ENCODE measurements at regions of chr9 and their contacts with region 1.

Region 1: DNA sequence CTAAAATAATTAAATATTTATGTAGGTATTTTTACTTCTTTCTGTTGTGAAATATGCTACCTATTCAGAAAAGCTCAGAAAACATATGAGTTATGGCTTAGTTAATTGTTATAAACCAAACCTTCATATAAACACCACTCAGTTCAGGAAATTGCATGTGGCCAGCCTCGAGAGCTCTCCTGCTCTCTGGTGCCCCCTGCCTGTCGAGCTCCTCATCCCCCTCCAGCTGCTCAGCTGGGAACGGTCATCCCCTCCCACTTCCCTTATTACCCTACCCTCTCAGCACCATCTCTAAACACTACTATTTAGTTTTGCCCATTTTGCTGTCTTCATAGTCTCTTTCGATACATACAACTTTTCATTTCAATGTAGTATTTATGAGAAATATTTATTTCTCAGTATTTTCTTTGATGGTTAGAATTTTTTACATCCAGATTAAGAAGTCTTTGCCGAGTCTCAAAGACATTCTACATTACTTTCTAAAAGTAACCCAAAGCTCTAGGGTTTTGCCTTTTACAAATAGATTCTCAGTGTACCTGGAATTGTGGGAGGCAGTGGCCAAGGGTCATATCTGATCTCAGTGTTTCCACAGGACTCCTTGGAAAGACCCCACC is 51.2 kb upstream of the SEMA4D start:
- DNase-seq: peak; percentile 75 to 93 (median 84)
- ATAC-seq: peak; percentile 99
- H3K4me3 ChIP-seq: no peak overlapping the region
- H3K4me3 Mint-ChIP-seq: no peak overlapping the region
- H3K27ac ChIP-seq: no peak overlapping the region
- H3K27ac Mint-ChIP-seq: peak overlapping the region; percentile 40
- H3K4me1 ChIP-seq: peaks cover 15% of the 10 kb centered on the region
- H3K4me1 Mint-ChIP-seq: peaks cover 26% of the 10 kb centered on the region
- H3K27me3 ChIP-seq: no peaks in the 10 kb centered on the region
- H3K27me3 Mint-ChIP-seq: no peaks in the 10 kb centered on the region
- CTCF ChIP-seq: peak; percentile 99

Region 2: DNA sequence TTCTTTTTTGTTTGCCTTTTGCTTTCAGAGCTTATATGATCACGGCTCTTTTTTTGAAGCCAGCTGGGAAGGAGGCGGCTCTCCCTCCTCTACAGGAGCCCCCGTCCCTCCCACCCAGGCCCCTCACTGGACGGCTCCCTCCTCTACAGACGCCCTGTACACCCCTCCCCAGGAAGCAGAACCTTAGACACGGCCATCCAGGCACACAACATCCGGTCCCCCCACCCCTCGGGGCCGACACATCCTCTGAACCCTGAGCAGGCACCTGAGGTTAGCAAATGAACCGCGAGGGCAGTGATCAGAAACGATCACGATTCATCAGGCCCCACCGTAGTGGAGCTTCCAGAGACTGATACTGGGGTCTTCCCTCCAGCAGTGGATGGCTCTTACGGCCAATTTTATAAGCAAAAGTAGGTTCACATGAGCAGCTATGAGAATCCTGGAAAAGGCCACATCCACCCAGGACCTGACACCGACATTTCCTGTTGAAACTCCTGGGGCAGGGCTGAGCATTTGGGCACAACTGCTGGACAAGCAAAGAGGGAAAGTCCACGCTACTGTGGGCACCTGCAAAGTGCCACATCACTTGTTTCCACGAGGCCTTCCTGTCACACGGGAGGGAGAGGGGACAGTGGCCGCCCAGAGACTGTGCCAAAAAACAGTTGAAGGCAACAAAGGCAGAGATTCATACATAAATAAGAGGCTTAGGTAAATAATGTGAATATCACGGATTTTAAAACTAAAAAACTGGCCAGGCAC is 130.1 kb before region 1 on chr9:
- CTCF ChIA-PET with region 1: interaction called, 17 read pairs
- POLR2A ChIA-PET with region 1: interaction called, 7 read pairs
- intact Hi-C with region 1: no loop called
- DNase-seq: peak; percentile 51 to 89 (median 73)
- ATAC-seq: peak; percentile 66
- H3K4me3 ChIP-seq: peak overlapping the region; percentile 44
- H3K4me3 Mint-ChIP-seq: peak overlapping the region; percentile 89
- H3K27ac ChIP-seq: peak overlapping the region; percentile 58 to 86
- H3K27ac Mint-ChIP-seq: peak overlapping the region; percentile 96
- H3K4me1 ChIP-seq: peaks cover 92% of the 10 kb centered on the region
- H3K4me1 Mint-ChIP-seq: peaks cover 97% of the 10 kb centered on the region
- H3K27me3 ChIP-seq: no peaks in the 10 kb centered on the region
- H3K27me3 Mint-ChIP-seq: no peaks in the 10 kb centered on the region
- CTCF ChIP-seq: no peak

Region 3: DNA sequence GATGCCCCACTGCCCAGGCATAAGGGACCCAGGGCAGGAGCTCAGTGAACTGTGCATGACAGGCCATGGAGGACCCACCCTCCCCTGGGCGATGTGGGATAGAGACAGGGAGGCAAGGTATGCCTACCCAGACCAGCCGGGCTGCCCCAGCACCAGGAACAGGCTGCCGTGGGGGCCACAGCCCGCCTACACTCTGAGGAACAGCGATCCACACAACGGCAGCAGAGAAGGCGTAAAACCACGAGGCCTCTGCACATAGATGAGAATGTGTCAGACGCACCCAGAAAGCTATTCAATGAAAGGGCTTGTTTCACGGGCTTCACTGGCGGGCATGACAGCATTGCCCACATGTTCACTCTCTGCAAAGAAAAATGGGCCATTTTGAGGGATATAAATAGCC is 100.8 kb before region 1 on chr9:
- CTCF ChIA-PET with region 1: interaction called, 11 read pairs
- POLR2A ChIA-PET with region 1: interaction called, 16 read pairs
- intact Hi-C with region 1: no loop called
- DNase-seq: peak in 6 of 14 experiments; percentile 31 to 60 (median 50)
- ATAC-seq: peak; percentile 35
- H3K4me3 ChIP-seq: no peak overlapping the region
- H3K4me3 Mint-ChIP-seq: peak overlapping the region; percentile 67
- H3K27ac ChIP-seq: peak overlapping the region; percentile 40 to 68
- H3K27ac Mint-ChIP-seq: peak overlapping the region; percentile 96
- H3K4me1 ChIP-seq: peaks cover 88% of the 10 kb centered on the region
- H3K4me1 Mint-ChIP-seq: peaks cover 88% of the 10 kb centered on the region
- H3K27me3 ChIP-seq: no peaks in the 10 kb centered on the region
- H3K27me3 Mint-ChIP-seq: no peaks in the 10 kb centered on the region
- CTCF ChIP-seq: no peak

Region 4: GRCh38 chr9:89477811-89478630 is 71.1 kb before region 1 on chr9:
- CTCF ChIA-PET with region 1: interaction called, 24 read pairs
- POLR2A ChIA-PET with region 1: interaction called, 13 read pairs
- intact Hi-C with region 1: loop called in 1 of 2 experiments (anchors 2 kb)
- DNase-seq: peak in 10 of 14 experiments; percentile 41 to 79 (median 65)
- ATAC-seq: peak; percentile 55
- H3K4me3 ChIP-seq: peak overlapping the region; percentile 51
- H3K4me3 Mint-ChIP-seq: peak overlapping the region; percentile 85
- H3K27ac ChIP-seq: peak overlapping the region; percentile 54 to 73
- H3K27ac Mint-ChIP-seq: peak overlapping the region; percentile 97
- H3K4me1 ChIP-seq: peaks cover 96% of the 10 kb centered on the region
- H3K4me1 Mint-ChIP-seq: peaks cover 91% of the 10 kb centered on the region
- H3K27me3 ChIP-seq: no peaks in the 10 kb centered on the region
- H3K27me3 Mint-ChIP-seq: no peaks in the 10 kb centered on the region
- CTCF ChIP-seq: no peak

Region 5: GRCh38 chr9:89505911-89506310 is 43.2 kb before region 1 on chr9:
- CTCF ChIA-PET with region 1: interaction called, 19 read pairs
- POLR2A ChIA-PET with region 1: interaction called, 7 read pairs
- intact Hi-C with region 1: loop called in 1 of 2 experiments (anchors 2 kb)
- DNase-seq: no peak
- ATAC-seq: no peak
- H3K4me3 ChIP-seq: no peak overlapping the region
- H3K4me3 Mint-ChIP-seq: no peak overlapping the region
- H3K27ac ChIP-seq: no peak overlapping the region
- H3K27ac Mint-ChIP-seq: no peak overlapping the region
- H3K4me1 ChIP-seq: peaks cover 54% of the 10 kb centered on the region
- H3K4me1 Mint-ChIP-seq: peaks cover 85% of the 10 kb centered on the region
- H3K27me3 ChIP-seq: no peaks in the 10 kb centered on the region
- H3K27me3 Mint-ChIP-seq: no peaks in the 10 kb centered on the region
- CTCF ChIP-seq: no peak